ENCODE measurements at regions of chr12 and their contacts with region 1.

Region 1: GRCh38 chr12:121005346-121005815 is 10.9 kb downstream of the C12orf43 start:
- DNase-seq: no peak
- H3K4me3 ChIP-seq: no peak overlapping the region
- H3K27ac ChIP-seq: no peak overlapping the region
- H3K4me1 ChIP-seq: peaks cover 5 to 21% (median 7%) of the 10 kb centered on the region in 3 donors
- H3K27me3 ChIP-seq: no peaks in the 10 kb centered on the region
- CTCF ChIP-seq: peak in 5 of 6 experiments; percentile 35 to 70 (median 46)
- POLR2A ChIP-seq: no peak

Region 2: DNA sequence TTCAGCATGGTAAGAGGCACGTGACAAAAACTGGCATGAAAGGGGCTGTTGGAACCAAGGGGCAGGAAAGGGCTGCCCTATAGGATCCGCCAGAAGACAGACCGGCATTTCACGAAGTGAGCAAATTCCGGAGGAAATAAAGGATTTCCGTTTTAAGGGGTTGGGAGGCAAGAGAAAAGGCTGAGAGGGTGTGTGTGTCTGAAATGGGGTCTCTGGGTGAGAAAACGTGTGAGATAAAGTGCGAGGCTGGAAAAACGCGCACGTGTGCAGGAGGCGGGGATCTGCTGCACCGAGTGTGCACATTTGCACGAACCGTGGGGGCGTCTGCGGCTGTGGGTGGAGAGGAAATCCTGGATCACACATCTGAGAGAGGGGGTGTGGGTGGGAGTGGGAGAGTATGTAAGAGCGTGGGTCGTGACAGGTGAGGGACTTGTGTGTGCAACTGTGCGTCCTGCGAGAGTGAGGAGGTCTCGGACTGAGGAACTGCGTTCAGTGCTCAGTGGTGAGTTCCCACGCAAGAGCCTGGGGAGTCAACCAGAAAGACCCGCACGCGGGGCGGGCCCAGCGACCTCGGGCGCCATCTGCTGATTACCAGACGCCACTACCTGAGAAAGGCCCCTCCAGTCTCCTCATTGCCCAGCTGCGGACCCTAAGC is 90.3 kb after region 1 on chr12:
- intact Hi-C with region 1: loop called (anchors 10 kb)
- DNase-seq: no peak
- H3K4me3 ChIP-seq: peak overlapping the region in 3 of 4 donors; percentile 13 to 59 (median 36)
- H3K27ac ChIP-seq: peak overlapping the region in 1 of 4 donors; percentile 31
- H3K4me1 ChIP-seq: peaks cover 9 to 14% (median 11%) of the 10 kb centered on the region in 3 donors
- H3K27me3 ChIP-seq: peaks cover 0 to 25% (median 0%) of the 10 kb centered on the region in 4 donors
- CTCF ChIP-seq: peak; percentile 58 to 85 (median 79)
- POLR2A ChIP-seq: no peak

Measured in esophagus squamous epithelium (tissue), 5 donors.